Activated CD4-positive, alpha-beta T cell treated with anti-CD3 and anti-CD28 coated beads for 36 hours (primary cell): ENCODE measurements at regions of chr19 and their contacts with region 1.

Region 1: GRCh38 chr19:12965017-12965811 is 4.2 kb upstream of the DAND5 start:
- DNase-seq: peak; percentile 91
- ATAC-seq: peak; percentile 92
- H3K4me3 Mint-ChIP-seq: peak overlapping the region; percentile 73
- H3K27ac Mint-ChIP-seq: peak overlapping the region; percentile 89
- H3K4me1 Mint-ChIP-seq: peaks cover 11% of the 10 kb centered on the region
- H3K27me3 Mint-ChIP-seq: no peaks in the 10 kb centered on the region

Region 2: DNA sequence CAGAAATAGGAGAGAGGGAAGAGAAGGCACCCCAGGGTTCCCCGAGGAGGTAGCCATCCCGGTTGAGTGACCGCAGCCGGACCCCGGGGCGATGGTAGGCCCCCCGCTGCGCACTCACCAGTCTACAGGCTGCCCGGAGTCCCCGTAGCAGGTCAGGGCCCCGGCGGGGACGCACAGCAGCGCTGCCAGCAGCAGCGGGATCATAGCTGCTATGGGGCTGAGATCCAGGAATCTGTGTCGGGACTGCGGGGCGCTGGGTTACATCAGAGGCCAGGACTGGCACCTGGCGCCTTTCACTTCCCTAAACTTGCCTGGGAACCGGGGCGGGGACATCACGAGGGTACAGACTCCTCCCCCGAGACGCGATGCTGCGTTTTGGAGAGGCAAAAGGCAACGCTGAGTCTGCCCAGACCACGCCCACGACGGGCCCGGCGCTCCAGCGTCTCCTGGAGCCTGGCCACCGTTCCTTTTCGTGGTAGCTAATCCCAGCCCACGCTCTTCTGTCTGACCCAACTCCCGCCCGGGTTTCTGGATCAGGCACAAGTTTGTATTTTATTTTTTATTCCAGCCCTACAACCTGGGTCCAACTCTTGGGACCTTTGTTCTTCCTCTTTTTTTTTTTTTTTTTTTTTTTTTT is 83.9 kb before region 1 on chr19 and contains the start of gene DNASE2:
- CTCF ChIA-PET with region 1: interaction called, 36 read pairs
- POLR2A ChIA-PET with region 1: interaction called, 4 read pairs
- intact Hi-C with region 1: loop called in 1 of 2 experiments (anchors 1 kb)
- DNase-seq: peak; percentile 96
- ATAC-seq: peak; percentile 75
- H3K4me3 Mint-ChIP-seq: peak within 1 kb of the TSS; percentile 88
- H3K27ac Mint-ChIP-seq: peak within 1 kb of the TSS; percentile 82
- H3K4me1 Mint-ChIP-seq: peaks cover 24% of the 10 kb centered on the region
- H3K27me3 Mint-ChIP-seq: no peaks in the 10 kb centered on the region
- total RNA-seq, gene DNASE2: 22.5 to 24.3 TPM

Region 3: DNA sequence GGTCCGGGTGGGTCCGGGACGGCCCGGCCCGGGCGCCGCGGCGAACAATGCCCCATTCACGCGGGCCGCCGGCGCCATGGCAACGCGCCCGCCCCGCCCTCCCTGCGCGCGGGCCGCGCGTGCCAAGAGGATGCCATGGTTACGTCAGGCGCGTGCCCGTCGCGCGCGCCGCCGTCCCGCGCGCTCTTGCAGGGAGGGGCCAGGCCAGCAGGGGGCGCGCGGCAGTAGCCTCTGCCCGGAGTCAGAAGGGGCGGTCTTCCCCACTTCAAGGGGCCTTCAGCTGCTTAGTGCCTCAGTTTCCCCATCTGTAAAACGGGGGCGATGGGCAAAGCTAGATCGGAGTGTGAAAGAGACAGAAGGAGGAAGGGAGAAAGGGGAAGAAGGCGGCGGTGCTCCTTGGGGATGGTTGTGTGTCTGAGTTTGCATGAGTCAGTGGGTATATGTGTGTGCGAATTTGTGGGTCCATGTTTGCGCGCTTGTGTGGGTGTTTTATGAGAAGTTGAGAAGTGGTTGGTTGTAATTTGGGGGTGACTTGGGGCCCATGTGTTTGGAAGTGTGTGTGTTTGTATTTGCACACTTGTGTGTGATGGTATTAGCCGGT is 18.4 kb after region 1 on chr19:
- CTCF ChIA-PET with region 1: interaction called, 23 read pairs
- POLR2A ChIA-PET with region 1: no interaction called
- intact Hi-C with region 1: loop called in 1 of 2 experiments (anchors 1 kb)
- DNase-seq: peak; percentile 90
- ATAC-seq: peak; percentile 80
- H3K4me3 Mint-ChIP-seq: no peak overlapping the region
- H3K27ac Mint-ChIP-seq: no peak overlapping the region
- H3K4me1 Mint-ChIP-seq: no peaks in the 10 kb centered on the region
- H3K27me3 Mint-ChIP-seq: no peaks in the 10 kb centered on the region

Region 4: GRCh38 chr19:13033819-13034611 is 68.8 kb after region 1 on chr19:
- CTCF ChIA-PET with region 1: interaction called, 13 read pairs
- POLR2A ChIA-PET with region 1: no interaction called
- intact Hi-C with region 1: no loop called
- DNase-seq: peak; percentile 74
- ATAC-seq: peak; percentile 86
- H3K4me3 Mint-ChIP-seq: no peak overlapping the region
- H3K27ac Mint-ChIP-seq: no peak overlapping the region
- H3K4me1 Mint-ChIP-seq: peaks cover 2% of the 10 kb centered on the region
- H3K27me3 Mint-ChIP-seq: no peaks in the 10 kb centered on the region

Region 5: DNA sequence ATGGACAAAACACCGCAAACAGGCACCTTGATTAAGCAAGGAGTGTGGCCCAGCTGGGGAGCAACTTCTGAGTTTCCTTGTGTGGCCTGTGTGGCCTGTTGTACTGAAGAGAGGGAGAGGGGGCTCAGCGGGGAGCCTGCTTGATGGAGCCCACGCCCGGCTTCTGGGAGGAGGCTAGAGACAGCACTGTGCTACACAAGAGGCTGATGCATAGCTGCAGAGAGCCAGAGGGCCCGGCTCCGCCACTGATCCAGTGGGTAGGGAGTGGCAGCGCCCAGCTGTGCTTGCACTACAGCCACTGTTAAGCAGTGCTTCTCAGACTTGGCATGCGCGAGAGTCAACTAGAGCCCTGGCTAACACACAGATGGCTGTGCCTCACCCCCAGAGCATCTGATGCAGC is 118.4 kb after region 1 on chr19:
- CTCF ChIA-PET with region 1: interaction called, 16 read pairs
- POLR2A ChIA-PET with region 1: no interaction called
- intact Hi-C with region 1: no loop called
- DNase-seq: no peak
- ATAC-seq: no peak
- H3K4me3 Mint-ChIP-seq: no peak overlapping the region
- H3K27ac Mint-ChIP-seq: no peak overlapping the region
- H3K4me1 Mint-ChIP-seq: no peaks in the 10 kb centered on the region
- H3K27me3 Mint-ChIP-seq: no peaks in the 10 kb centered on the region

Region 6: GRCh38 chr19:13104360-13104847 is 139.2 kb after region 1 on chr19:
- CTCF ChIA-PET with region 1: interaction called, 20 read pairs
- POLR2A ChIA-PET with region 1: no interaction called
- intact Hi-C with region 1: no loop called
- DNase-seq: peak; percentile 84
- ATAC-seq: peak; percentile 48
- H3K4me3 Mint-ChIP-seq: peak overlapping the region; percentile 78
- H3K27ac Mint-ChIP-seq: peak overlapping the region; percentile 90
- H3K4me1 Mint-ChIP-seq: peaks cover 34% of the 10 kb centered on the region
- H3K27me3 Mint-ChIP-seq: no peaks in the 10 kb centered on the region